Activated CD4-positive, alpha-beta T cell treated with anti-CD3 and anti-CD28 coated beads, Interleukin-2, amount 10 ng/mL, durations not matched to agents 24 days and 14 days (primary cell): ENCODE measurements at regions of chr19 and their contacts with region 1.

Region 1: DNA sequence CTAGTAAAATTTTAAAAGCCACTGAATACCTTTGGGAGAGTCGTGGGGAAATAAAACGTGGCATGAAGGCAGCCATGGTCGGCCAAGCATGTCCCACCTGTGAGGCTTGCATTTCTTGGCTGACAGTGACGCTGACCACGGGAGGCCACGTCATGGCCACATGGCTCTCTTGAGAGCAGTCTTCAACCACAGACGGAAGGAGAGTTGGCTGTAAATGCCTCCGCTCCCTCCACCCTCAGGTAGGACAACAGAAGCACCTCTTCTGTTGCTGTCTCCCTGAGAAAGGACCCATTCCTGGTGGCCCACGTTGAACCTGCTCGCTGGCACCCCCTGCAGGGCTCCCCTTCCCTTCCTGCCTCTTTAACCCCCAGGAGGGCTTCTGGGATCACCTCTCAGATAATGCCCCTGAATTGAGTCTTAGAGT is 10.6 kb upstream of the LRRC25 start:
- DNase-seq: peak; percentile 77
- H3K4me3 Mint-ChIP-seq: no peak overlapping the region
- H3K27ac Mint-ChIP-seq: no peak overlapping the region
- H3K4me1 Mint-ChIP-seq: peaks cover 5% of the 10 kb centered on the region
- H3K27me3 Mint-ChIP-seq: peaks cover 6% of the 10 kb centered on the region

Region 2: DNA sequence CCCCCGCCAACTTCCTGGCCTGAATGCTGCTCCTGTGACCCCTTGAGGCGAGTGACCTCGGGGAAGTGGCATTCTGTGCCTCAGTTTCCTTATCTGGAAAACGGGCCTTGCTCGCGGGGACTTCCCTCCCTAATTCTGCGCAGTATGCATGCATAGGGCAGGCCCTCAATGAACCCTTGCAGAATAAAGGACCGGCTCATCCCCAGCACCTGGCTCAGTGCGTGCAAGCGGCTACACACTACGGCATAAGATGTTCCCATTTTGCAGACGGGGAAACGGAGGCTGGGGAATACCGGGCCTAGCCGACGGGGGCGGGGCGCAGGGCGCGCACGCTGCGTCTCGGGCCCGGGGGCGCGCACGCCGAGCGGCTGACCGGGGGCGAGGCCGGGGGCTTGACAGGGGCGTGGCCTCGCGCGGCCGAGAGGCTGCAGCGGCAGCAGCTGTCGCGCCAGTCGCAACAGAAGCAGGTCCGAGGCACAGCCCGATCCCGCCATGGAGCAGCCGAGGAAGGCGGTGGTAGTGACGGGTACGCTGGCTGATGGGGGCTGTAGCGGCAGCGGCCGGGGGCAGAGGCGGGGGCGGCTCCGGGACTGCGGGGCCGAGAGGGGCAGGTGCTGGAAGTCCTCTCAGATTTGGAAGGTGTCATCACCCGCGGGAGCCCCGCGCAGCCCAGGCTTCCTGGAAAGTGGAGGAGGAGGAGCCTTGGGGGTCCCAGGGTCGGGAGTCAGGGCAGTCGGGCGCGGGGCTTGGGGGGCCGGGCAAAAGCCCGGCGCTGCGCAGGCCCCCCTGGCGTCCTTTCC is 67.7 kb before region 1 on chr19 and contains the start of gene PGPEP1:
- intact Hi-C with region 1: loop called (anchors 2 kb)
- DNase-seq: peak; percentile 91
- H3K4me3 Mint-ChIP-seq: peak within 1 kb of the TSS; percentile 84
- H3K27ac Mint-ChIP-seq: peak within 1 kb of the TSS; percentile 90
- H3K4me1 Mint-ChIP-seq: peaks cover 10% of the 10 kb centered on the region
- H3K27me3 Mint-ChIP-seq: no peaks in the 10 kb centered on the region
- total RNA-seq, gene PGPEP1: 14.6 and 18.5 TPM in 2 replicates

Region 3: DNA sequence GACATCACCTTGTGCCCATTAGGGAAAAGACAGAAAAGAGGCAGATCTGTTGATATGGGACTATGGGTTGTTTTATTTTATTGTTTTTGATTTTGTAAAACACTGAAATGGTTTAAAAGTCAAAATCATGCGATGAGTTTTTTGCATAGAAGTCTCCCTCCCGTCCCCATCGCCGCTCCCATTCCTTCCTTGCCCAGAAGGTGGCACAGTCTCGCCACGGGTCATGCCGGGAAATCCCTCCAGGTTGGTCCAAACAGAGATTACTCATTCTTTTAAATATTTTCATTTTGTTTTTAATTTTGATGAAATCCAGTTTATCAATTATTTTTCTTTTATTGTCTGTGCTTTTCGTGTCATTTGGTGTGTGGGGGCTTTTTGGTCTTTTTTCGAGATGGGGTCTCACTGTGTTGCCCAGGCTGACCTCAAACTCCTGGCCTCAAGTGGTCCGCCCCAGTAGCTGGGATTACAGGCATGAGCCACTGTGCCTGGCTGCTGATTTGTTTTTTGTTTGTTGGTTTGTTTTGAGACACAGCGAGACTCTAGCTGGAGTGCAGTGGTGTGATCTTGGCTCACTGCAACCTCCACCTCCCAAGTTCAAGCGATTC is 58.4 kb before region 1 on chr19:
- intact Hi-C with region 1: loop called (anchors 2 kb)
- DNase-seq: peak; percentile 71
- H3K4me3 Mint-ChIP-seq: no peak overlapping the region
- H3K27ac Mint-ChIP-seq: no peak overlapping the region
- H3K4me1 Mint-ChIP-seq: no peaks in the 10 kb centered on the region
- H3K27me3 Mint-ChIP-seq: no peaks in the 10 kb centered on the region

Region 4: DNA sequence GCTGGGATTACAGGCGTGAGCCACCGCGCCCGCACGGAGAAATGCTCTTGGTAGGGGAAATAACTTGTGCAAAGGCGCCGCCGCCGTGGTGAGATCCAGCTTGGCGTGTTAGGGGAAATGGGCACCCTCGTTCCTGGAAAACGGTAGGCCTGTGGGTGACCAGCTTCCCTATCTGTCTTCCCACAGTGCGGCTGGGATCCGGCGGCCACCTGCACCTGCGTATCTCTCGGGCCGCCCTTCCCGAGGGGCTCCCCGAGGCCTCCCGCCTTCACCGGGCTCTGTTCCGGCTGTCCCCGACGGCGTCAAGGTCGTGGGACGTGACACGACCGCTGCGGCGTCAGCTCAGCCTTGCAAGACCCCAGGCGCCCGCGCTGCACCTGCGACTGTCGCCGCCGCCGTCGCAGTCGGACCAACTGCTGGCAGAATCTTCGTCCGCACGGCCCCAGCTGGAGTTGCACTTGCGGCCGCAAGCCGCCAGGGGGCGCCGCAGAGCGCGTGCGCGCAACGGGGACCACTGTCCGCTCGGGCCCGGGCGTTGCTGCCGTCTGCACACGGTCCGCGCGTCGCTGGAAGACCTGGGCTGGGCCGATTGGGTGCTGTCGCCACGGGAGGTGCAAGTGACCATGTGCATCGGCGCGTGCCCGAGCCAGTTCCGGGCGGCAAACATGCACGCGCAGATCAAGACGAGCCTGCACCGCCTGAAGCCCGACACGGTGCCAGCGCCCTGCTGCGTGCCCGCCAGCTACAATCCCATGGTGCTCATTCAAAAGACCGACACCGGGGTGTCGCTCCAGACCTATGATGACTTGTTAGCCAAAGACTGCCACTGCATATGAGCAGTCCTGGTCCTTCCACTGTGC is 19.7 kb before region 1 on chr19:
- intact Hi-C with region 1: loop called (anchors 2 kb)
- DNase-seq: peak; percentile 94
- H3K4me3 Mint-ChIP-seq: peak overlapping the region; percentile 78
- H3K27ac Mint-ChIP-seq: no peak overlapping the region
- H3K4me1 Mint-ChIP-seq: peaks cover 4% of the 10 kb centered on the region
- H3K27me3 Mint-ChIP-seq: peaks cover 51% of the 10 kb centered on the region